GM12878 (cell line): ENCODE measurements at regions of chr19 and their contacts with region 1.

Region 1: DNA sequence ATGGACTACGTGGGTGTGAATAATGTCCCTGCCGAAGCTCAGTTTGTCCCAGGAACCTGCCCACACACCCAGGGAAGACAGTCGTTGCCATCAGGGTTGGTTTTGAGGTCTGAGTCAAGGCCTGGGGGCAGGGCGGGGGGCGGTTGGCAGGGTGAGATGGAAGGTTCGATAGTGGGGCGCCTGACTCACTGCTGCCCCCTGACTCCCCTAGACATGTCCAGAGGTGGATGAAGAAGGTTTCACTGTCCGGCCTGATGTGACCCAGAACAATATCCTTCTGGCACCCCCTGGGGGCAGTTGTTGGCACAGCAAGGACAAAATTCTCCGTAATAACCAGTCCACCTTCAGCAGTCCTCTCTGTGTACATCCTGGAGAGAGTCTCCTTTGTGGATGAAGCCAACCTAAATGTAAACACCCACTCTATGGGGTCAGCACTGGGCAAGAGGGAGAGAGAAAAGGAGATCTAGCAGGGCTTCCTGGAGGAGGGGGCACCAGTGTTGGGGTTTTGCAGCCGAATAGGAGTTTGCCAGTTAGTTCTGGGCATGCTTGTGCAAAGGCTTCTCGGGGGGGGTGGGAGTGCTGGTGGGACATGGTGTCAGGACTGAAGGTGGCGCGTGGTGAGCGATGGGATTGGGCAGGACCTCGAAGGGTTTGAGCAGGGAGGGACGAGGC is 19.6 kb upstream of the B3GNT3 start:
- DNase-seq: no peak
- ATAC-seq: 0 out of 3 replicates have a peak, but pooled peaks have one; percentile 7
- H3K4me3 ChIP-seq: no peak overlapping the region
- H3K27ac ChIP-seq: peak overlapping the region; percentile 76
- H3K4me1 ChIP-seq: peaks cover 20% of the 10 kb centered on the region
- H3K27me3 ChIP-seq: no peaks in the 10 kb centered on the region
- CTCF ChIP-seq: peak; percentile 48 to 71 (median 64)
- EP300 ChIP-seq: no peak
- POLR2A ChIP-seq: no peak; the same call in 1 of the 2 replicates
- RAD21 ChIP-seq: peak; percentile 60

Region 2: DNA sequence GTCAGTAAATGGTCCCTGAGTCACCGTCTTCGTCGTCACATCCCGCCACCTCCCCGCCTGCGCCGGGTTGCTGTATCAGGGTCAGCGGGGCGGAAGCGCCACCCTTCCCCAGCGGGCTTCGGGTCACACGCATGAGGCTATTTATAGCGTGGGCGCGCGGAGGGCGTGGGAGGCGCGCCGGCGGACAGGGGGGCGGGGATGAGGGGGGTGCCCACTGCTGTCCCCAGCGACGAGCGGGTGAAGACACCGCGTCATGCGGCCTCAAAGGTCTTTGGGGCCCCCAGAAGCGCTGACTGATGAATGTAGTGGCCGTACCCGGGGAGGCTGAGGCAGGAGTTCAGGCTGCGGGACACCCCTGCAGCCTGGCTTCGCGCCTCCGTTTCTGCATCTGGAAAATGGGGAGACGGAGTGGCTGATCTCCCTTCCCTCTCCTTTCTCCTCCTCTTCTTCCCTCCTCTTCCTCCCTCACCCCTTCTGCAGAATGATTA is 95.1 kb before region 1 on chr19:
- CTCF ChIA-PET with region 1: no interaction called
- POLR2A ChIA-PET with region 1: no interaction called
- RAD21 ChIA-PET with region 1: no interaction called
- SMC1A ChIA-PET with region 1: no interaction called
- in situ Hi-C with region 1: no loop called
- intact Hi-C with region 1: no loop called
- DNase-seq: peak; percentile 27
- ATAC-seq: peak; percentile 96
- H3K4me3 ChIP-seq: no peak overlapping the region; the same call in 1 of the 2 replicates
- H3K27ac ChIP-seq: no peak overlapping the region
- H3K4me1 ChIP-seq: peaks cover 5% of the 10 kb centered on the region; the same call in 1 of the 2 replicates
- H3K27me3 ChIP-seq: peaks cover 0 to 5% of the 10 kb centered on the region in 2 experiments; a peak in 3 of 4 replicates
- CTCF ChIP-seq: 0 out of 6 replicates have a peak, but pooled peaks of 1 of the 3 experiments have one; percentile 9
- EP300 ChIP-seq: no peak
- POLR2A ChIP-seq: peak; percentile 49; the same call in 1 of the 2 replicates
- RAD21 ChIP-seq: no peak

Region 3: GRCh38 chr19:17703824-17704463 is 71.4 kb before region 1 on chr19:
- CTCF ChIA-PET with region 1: interaction called, 28 read pairs
- POLR2A ChIA-PET with region 1: no interaction called
- RAD21 ChIA-PET with region 1: interaction called, 24 read pairs
- SMC1A ChIA-PET with region 1: interaction called, 13 read pairs
- in situ Hi-C with region 1: no loop called
- intact Hi-C with region 1: no loop called
- DNase-seq: no peak
- ATAC-seq: peak; percentile 93
- H3K4me3 ChIP-seq: no peak overlapping the region
- H3K27ac ChIP-seq: no peak overlapping the region
- H3K4me1 ChIP-seq: no peaks in the 10 kb centered on the region
- H3K27me3 ChIP-seq: no peaks in the 10 kb centered on the region; a peak in 1 of 4 replicates
- CTCF ChIP-seq: peak; percentile 82 to 93 (median 88)
- EP300 ChIP-seq: no peak
- POLR2A ChIP-seq: no peak
- RAD21 ChIP-seq: peak; percentile 80

Region 4: GRCh38 chr19:17718947-17719711 is 56.3 kb before region 1 on chr19 and contains the start of gene MAP1S:
- CTCF ChIA-PET with region 1: interaction called, 23 read pairs
- POLR2A ChIA-PET with region 1: interaction called, 3 read pairs
- RAD21 ChIA-PET with region 1: interaction called, 4 read pairs
- SMC1A ChIA-PET with region 1: interaction called, 8 read pairs
- in situ Hi-C with region 1: no loop called
- intact Hi-C with region 1: no loop called
- DNase-seq: no peak
- ATAC-seq: peak; percentile 90
- H3K4me3 ChIP-seq: peak within 1 kb of the TSS; percentile 99
- H3K27ac ChIP-seq: peak within 1 kb of the TSS; percentile 38; the same call in 1 of the 2 replicates
- H3K4me1 ChIP-seq: peaks cover 27% of the 10 kb centered on the region
- H3K27me3 ChIP-seq: no peaks in the 10 kb centered on the region
- CTCF ChIP-seq: no peak
- EP300 ChIP-seq: no peak
- POLR2A ChIP-seq: peak; percentile 91
- RAD21 ChIP-seq: no peak
- polyA plus RNA-seq, gene MAP1S: 2.1 to 3.4 TPM

Region 5: GRCh38 chr19:17739121-17739875 is 36.1 kb before region 1 on chr19:
- CTCF ChIA-PET with region 1: interaction called, 5 read pairs
- POLR2A ChIA-PET with region 1: interaction called, 4 read pairs
- RAD21 ChIA-PET with region 1: interaction called, 4 read pairs
- SMC1A ChIA-PET with region 1: interaction called, 13 read pairs
- in situ Hi-C with region 1: no loop called
- intact Hi-C with region 1: no loop called
- DNase-seq: peak; percentile 40
- ATAC-seq: peak; percentile 83
- H3K4me3 ChIP-seq: no peak overlapping the region
- H3K27ac ChIP-seq: peak overlapping the region; percentile 45; the same call in 1 of the 2 replicates
- H3K4me1 ChIP-seq: peaks cover 16% of the 10 kb centered on the region
- H3K27me3 ChIP-seq: no peaks in the 10 kb centered on the region
- CTCF ChIP-seq: no peak
- EP300 ChIP-seq: peak in 1 of 2 experiments; percentile 74; a peak in 1 of 4 replicates
- POLR2A ChIP-seq: no peak
- RAD21 ChIP-seq: no peak

Region 6: DNA sequence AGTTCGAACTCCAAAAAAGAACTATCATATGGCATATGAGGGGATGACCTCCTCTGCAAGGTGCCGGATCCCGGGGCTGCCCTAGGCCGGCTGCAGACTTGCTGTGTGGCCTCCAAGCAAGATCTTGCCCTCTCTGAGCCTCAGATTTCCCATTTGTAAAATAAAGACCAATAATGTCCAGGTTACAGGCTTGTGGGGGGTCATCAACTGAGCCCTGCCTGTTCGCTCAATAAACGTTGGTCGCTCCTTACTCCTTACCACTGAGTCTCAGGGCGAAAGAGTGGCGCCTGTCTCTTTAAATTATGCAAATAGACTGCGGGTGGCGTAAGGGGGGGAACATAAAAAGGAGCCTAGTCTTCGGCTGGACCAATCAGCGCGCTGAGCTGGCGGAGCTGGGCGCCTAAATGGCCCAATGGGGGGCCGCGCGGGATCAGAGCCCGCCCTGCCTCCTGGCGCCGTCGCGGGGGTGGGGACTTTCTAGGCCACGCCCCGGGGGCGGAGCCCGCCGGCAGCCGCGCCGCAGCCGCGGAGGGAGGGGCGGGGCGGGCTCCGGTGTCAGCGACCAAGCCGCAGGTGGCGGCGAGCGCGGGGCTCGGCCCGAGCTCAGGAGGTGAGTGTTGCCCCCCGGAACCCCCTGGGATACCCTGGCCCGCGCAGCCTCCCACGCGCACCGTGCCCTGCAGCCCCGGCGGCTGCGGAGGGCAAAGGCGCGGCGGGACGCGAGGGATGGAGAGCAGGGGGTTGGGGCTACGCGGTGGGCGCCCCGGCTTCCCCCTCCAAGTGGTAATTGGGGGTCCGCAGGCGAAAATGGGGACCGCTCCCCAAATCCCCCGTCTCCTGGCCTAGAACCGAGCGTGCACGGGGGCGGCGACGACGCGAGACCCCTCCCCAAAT is 27.9 kb before region 1 on chr19:
- CTCF ChIA-PET with region 1: interaction called, 27 read pairs
- POLR2A ChIA-PET with region 1: interaction called, 13 read pairs
- RAD21 ChIA-PET with region 1: interaction called, 96 read pairs
- SMC1A ChIA-PET with region 1: interaction called, 19 read pairs
- in situ Hi-C with region 1: no loop called
- intact Hi-C with region 1: no loop called
- DNase-seq: peak; percentile 68
- ATAC-seq: peak; percentile 87
- H3K4me3 ChIP-seq: peak overlapping the region; percentile 77
- H3K27ac ChIP-seq: peak overlapping the region; percentile 55
- H3K4me1 ChIP-seq: peaks cover 23% of the 10 kb centered on the region
- H3K27me3 ChIP-seq: no peaks in the 10 kb centered on the region
- CTCF ChIP-seq: no peak
- EP300 ChIP-seq: no peak
- POLR2A ChIP-seq: peak; percentile 57; the same call in 1 of the 2 replicates
- RAD21 ChIP-seq: no peak

Region 7: DNA sequence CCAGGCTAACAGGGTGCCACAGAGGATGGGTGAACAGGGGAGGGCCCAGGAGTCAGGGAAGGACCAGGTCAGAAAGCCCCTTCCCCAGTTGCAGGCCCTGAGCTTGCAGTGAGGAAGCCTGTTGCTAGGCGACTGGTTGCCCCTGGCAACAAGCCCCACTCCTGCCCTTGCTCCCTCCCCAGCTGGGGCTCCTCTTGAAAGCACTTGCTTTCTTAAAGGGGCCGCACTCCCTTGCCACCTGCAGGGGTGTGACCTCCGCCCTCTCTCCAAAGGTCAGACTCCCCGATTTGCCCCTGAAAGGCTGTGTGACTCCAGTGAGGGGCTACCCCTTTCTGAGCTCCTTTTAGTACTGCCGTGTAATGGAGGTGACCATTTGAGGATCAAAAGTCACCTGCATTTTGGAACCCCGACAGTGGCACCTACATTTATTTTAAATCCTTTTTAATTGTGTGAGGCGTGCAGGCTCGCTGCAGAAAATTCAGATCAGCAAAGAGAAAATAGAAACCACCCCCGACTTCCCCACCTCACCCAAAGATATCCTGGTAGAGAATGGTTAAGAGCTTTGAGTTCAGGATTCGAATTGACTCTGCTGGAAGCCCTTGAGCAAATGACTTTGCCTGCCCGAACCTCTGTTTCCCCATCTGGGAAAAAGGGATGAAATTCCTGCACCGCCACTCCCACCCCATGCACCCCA is 19.3 kb before region 1 on chr19:
- CTCF ChIA-PET with region 1: interaction called, 27 read pairs
- POLR2A ChIA-PET with region 1: interaction called, 23 read pairs
- RAD21 ChIA-PET with region 1: interaction called, 96 read pairs
- SMC1A ChIA-PET with region 1: interaction called, 20 read pairs
- in situ Hi-C with region 1: no loop called
- intact Hi-C with region 1: loop called (anchors 2 kb)
- DNase-seq: peak; percentile 37
- ATAC-seq: peak; percentile 45
- H3K4me3 ChIP-seq: peak overlapping the region; percentile 69
- H3K27ac ChIP-seq: peak overlapping the region; percentile 66
- H3K4me1 ChIP-seq: peaks cover 61% of the 10 kb centered on the region
- H3K27me3 ChIP-seq: no peaks in the 10 kb centered on the region
- CTCF ChIP-seq: no peak
- EP300 ChIP-seq: no peak
- POLR2A ChIP-seq: no peak
- RAD21 ChIP-seq: no peak

Region 8: DNA sequence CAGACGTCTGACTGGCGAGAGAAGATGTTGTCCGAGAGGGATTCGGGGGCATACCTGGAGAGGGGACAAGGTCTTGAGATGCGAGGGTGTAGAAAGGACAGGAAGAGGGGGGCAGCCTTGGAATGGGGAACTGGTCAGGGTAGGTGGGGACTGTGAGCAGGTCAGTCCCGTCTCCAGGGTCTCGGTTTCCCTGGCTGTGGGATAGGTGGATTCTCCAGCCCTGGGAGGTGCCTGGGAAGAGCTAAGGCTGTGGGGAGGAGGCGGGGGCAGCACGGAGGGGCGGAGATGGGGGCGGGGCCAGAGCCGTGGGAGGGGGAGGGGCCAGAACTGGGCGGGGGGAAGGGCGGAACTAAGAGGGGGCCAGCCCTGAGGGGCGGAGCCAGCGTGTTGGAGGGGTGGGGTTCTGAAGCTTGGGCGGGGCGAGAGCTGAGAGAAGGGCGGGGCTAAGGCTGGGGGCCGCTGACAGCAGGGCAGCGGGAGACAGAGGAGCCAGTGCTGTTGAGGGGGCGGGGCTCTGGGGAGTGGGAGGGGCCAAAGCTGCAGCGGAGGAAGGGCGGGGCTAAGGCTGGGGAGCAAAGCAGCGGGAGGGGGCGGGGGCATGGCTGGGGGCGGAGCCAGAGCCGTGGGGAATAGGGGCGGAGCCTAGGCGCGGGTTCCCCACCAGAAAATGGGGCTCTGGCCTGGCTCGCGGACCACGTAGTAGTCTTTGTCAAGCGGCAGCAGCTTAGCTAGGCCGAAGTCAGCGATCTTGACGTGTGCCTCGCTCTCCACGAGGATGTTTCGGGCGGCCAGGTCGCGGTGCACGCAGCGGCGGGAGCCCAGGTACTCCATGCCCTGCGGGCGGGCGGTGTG is 55.4 kb after region 1 on chr19:
- CTCF ChIA-PET with region 1: no interaction called
- POLR2A ChIA-PET with region 1: no interaction called
- RAD21 ChIA-PET with region 1: no interaction called
- SMC1A ChIA-PET with region 1: no interaction called
- in situ Hi-C with region 1: no loop called
- intact Hi-C with region 1: no loop called
- DNase-seq: no peak
- ATAC-seq: peak; percentile 81
- H3K4me3 ChIP-seq: no peak overlapping the region
- H3K27ac ChIP-seq: no peak overlapping the region
- H3K4me1 ChIP-seq: no peaks in the 10 kb centered on the region
- H3K27me3 ChIP-seq: no peaks in the 10 kb centered on the region
- CTCF ChIP-seq: no peak
- EP300 ChIP-seq: no peak
- POLR2A ChIP-seq: no peak
- RAD21 ChIP-seq: no peak

Region 9: DNA sequence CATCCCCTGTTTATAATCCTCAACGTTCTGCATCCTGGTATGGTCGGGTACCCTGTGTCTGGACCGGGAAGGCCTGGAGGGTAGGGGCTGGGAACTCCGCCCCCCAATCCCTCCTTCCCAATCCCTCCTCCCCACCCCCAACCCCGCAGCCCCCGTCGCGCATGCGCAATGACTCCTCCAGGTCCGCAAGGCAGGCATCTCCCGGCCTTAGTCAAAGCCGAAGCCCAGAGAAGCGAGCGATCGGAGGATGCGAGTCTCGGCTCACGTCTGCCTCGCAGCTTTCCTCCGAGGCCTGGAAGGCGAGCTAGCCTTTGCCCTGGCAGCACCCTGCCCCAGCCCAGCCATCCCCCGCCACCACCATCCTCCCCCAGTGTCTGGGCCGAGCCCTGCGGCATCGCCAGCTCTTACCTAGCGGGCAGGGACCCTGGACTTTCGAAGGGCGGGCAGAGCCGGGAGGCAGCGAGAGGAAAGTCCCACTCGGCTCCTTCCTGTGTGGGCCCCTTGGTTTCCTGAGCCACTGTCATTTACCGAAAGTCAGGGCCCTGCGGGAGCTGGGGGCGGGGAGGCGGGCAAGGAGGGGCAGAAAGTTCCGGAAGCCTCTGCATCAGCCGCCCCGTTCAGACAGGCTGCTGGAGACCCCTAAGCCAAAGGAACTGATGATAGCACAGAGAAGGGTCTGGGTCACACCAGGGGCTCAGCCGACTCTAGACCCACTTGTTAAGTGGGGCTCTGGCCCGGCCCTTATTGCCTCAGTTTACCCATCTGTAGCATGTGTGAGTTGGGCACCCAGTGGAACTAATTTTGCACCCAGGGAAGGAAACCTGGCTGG is 72.4 kb after region 1 on chr19 and contains the start of gene JAK3:
- CTCF ChIA-PET with region 1: interaction called, 7 read pairs
- POLR2A ChIA-PET with region 1: interaction called, 5 read pairs
- RAD21 ChIA-PET with region 1: interaction called, 18 read pairs
- SMC1A ChIA-PET with region 1: interaction called, 12 read pairs
- in situ Hi-C with region 1: no loop called
- intact Hi-C with region 1: no loop called
- DNase-seq: peak; percentile 77
- ATAC-seq: peak; percentile 93
- H3K4me3 ChIP-seq: peak within 1 kb of the TSS; percentile 72
- H3K27ac ChIP-seq: peak within 1 kb of the TSS; percentile 71
- H3K4me1 ChIP-seq: peaks cover 36% of the 10 kb centered on the region
- H3K27me3 ChIP-seq: no peaks in the 10 kb centered on the region
- CTCF ChIP-seq: no peak
- EP300 ChIP-seq: peak; percentile 14 to 77; a peak in 2 of 4 replicates
- POLR2A ChIP-seq: peak; percentile 93
- RAD21 ChIP-seq: no peak
- polyA plus RNA-seq, gene JAK3: 7.8 to 37.2 TPM